CD8-positive, alpha-beta T cell (primary cell): ENCODE measurements at regions of chr1 and their contacts with region 1.

Region 1: DNA sequence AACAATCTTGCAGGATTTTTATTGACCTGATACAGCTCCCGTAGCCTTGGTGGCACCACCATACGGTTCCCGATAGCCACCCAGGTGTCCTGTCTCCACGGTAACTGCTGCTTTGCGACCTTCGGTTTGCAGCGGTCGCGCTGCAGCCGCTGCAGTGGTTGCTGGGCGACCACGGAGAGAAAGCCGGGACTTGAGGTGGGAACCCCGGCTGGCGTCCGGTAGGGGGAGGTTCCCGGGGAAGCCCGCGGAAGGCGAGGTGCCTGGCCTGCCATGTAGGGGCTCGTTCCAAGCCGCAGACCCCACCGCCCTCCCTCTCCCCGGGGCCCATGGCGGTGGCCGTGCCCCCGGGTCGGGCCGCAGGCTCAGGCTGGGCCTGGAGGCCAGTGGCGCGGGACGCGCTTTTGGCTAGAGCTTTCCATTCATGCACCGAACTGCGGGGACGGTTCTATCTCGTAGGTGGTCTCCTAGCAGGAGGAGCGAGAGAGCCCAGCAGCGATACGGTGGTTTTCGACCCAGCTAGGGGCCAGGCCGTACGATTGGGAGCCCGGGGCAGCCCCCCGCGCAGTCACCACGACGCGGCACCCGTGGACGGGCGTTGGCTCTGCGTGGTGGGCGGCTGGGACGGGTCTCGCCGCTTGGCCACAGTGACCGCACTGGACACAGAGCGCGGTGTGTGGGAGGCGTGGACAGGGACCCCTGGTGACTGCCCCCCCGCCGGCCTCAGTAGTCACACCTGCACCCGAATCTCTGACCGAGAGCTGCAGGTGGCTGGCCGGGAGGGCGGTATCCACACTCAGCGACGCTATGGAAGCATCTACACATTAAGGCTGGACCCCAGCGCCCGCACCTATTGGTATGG is at the start of gene KLHDC9:
- DNase-seq: peak; percentile 16 to 87 (median 68)
- ATAC-seq: peak; percentile 67
- H3K4me3 ChIP-seq: peak within 1 kb of the TSS; percentile 54 to 65
- H3K4me3 Mint-ChIP-seq: peak within 1 kb of the TSS; percentile 89
- H3K27ac ChIP-seq: peak within 1 kb of the TSS in 1 of 2 experiments; percentile 47
- H3K27ac Mint-ChIP-seq: peak within 1 kb of the TSS; percentile 92
- H3K4me1 ChIP-seq: peaks cover 14% of the 10 kb centered on the region
- H3K4me1 Mint-ChIP-seq: peaks cover 24% of the 10 kb centered on the region
- H3K27me3 ChIP-seq: no peaks in the 10 kb centered on the region
- H3K27me3 Mint-ChIP-seq: no peaks in the 10 kb centered on the region
- CTCF ChIP-seq: no peak
- total RNA-seq, gene KLHDC9: not detected

Region 2: GRCh38 chr1:160916666-160917065 is 181.8 kb before region 1 on chr1:
- CTCF ChIA-PET with region 1: no interaction called
- POLR2A ChIA-PET with region 1: no interaction called
- intact Hi-C with region 1: no loop called
- DNase-seq: no peak
- ATAC-seq: no peak
- H3K4me3 ChIP-seq: no peak overlapping the region
- H3K4me3 Mint-ChIP-seq: no peak overlapping the region
- H3K27ac ChIP-seq: no peak overlapping the region
- H3K27ac Mint-ChIP-seq: no peak overlapping the region
- H3K4me1 ChIP-seq: no peaks in the 10 kb centered on the region
- H3K4me1 Mint-ChIP-seq: no peaks in the 10 kb centered on the region
- H3K27me3 ChIP-seq: no peaks in the 10 kb centered on the region
- H3K27me3 Mint-ChIP-seq: peaks cover 8% of the 10 kb centered on the region
- CTCF ChIP-seq: no peak

Region 3: GRCh38 chr1:160987359-160988062 is 110.9 kb before region 1 on chr1:
- CTCF ChIA-PET with region 1: interaction called, 15 read pairs
- POLR2A ChIA-PET with region 1: no interaction called
- intact Hi-C with region 1: no loop called
- DNase-seq: no peak
- ATAC-seq: no peak
- H3K4me3 ChIP-seq: no peak overlapping the region
- H3K4me3 Mint-ChIP-seq: no peak overlapping the region
- H3K27ac ChIP-seq: no peak overlapping the region
- H3K27ac Mint-ChIP-seq: no peak overlapping the region
- H3K4me1 ChIP-seq: peaks cover 4% of the 10 kb centered on the region
- H3K4me1 Mint-ChIP-seq: peaks cover 10% of the 10 kb centered on the region
- H3K27me3 ChIP-seq: peaks cover 0 to 3% of the 10 kb centered on the region in 2 experiments
- H3K27me3 Mint-ChIP-seq: peaks cover 6% of the 10 kb centered on the region
- CTCF ChIP-seq: no peak

Region 4: GRCh38 chr1:161021165-161021960 is 77.1 kb before region 1 on chr1:
- CTCF ChIA-PET with region 1: interaction called, 16 read pairs
- POLR2A ChIA-PET with region 1: interaction called, 7 read pairs
- intact Hi-C with region 1: no loop called
- DNase-seq: peak; percentile 75 to 95 (median 89)
- ATAC-seq: peak; percentile 94
- H3K4me3 ChIP-seq: peak overlapping the region; percentile 51 to 89
- H3K4me3 Mint-ChIP-seq: peak overlapping the region; percentile 93
- H3K27ac ChIP-seq: peak overlapping the region; percentile 22 to 73
- H3K27ac Mint-ChIP-seq: peak overlapping the region; percentile 83
- H3K4me1 ChIP-seq: peaks cover 14% of the 10 kb centered on the region
- H3K4me1 Mint-ChIP-seq: peaks cover 37% of the 10 kb centered on the region
- H3K27me3 ChIP-seq: no peaks in the 10 kb centered on the region
- H3K27me3 Mint-ChIP-seq: no peaks in the 10 kb centered on the region
- CTCF ChIP-seq: no peak

Region 5: GRCh38 chr1:161054805-161055204 is 43.6 kb before region 1 on chr1:
- CTCF ChIA-PET with region 1: interaction called, 11 read pairs
- POLR2A ChIA-PET with region 1: interaction called, 3 read pairs
- intact Hi-C with region 1: loop called (anchors 5 kb)
- DNase-seq: no peak
- ATAC-seq: no peak
- H3K4me3 ChIP-seq: no peak overlapping the region
- H3K4me3 Mint-ChIP-seq: no peak overlapping the region
- H3K27ac ChIP-seq: no peak overlapping the region
- H3K27ac Mint-ChIP-seq: peak overlapping the region; percentile 22
- H3K4me1 ChIP-seq: peaks cover 13% of the 10 kb centered on the region
- H3K4me1 Mint-ChIP-seq: peaks cover 34% of the 10 kb centered on the region
- H3K27me3 ChIP-seq: no peaks in the 10 kb centered on the region
- H3K27me3 Mint-ChIP-seq: no peaks in the 10 kb centered on the region
- CTCF ChIP-seq: no peak

Region 6: GRCh38 chr1:161082991-161083742 is 15.3 kb before region 1 on chr1:
- CTCF ChIA-PET with region 1: interaction called, 18 read pairs
- POLR2A ChIA-PET with region 1: interaction called, 4 read pairs
- intact Hi-C with region 1: no loop called
- DNase-seq: peak in 1 of 9 experiments; percentile 41
- ATAC-seq: no peak
- H3K4me3 ChIP-seq: no peak overlapping the region
- H3K4me3 Mint-ChIP-seq: no peak overlapping the region
- H3K27ac ChIP-seq: no peak overlapping the region
- H3K27ac Mint-ChIP-seq: no peak overlapping the region
- H3K4me1 ChIP-seq: no peaks in the 10 kb centered on the region
- H3K4me1 Mint-ChIP-seq: no peaks in the 10 kb centered on the region
- H3K27me3 ChIP-seq: no peaks in the 10 kb centered on the region
- H3K27me3 Mint-ChIP-seq: no peaks in the 10 kb centered on the region
- CTCF ChIP-seq: no peak

Region 7: DNA sequence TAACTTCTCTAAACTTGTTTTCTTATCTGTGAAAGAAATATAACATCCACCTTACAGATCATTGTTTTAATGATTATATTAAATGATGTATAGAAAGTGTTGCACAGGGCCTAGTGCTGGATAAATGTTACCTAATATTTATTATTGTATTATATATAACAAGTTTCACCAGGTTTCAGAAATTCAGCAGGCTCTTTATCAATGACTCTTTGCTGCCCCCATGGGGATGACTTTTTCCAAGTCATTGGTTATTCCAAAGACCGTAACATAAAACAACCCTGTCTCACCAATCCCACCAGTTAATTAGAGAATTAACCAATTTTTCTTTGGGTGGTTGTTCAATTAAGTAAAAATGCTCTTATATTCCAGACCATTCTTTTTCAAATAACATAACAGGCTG is 41.3 kb after region 1 on chr1:
- CTCF ChIA-PET with region 1: interaction called, 47 read pairs
- POLR2A ChIA-PET with region 1: interaction called, 3 read pairs
- intact Hi-C with region 1: loop called (anchors 2 to 5 kb)
- DNase-seq: peak in 6 of 9 experiments; percentile 16 to 67 (median 46)
- ATAC-seq: no peak
- H3K4me3 ChIP-seq: no peak overlapping the region
- H3K4me3 Mint-ChIP-seq: no peak overlapping the region
- H3K27ac ChIP-seq: no peak overlapping the region
- H3K27ac Mint-ChIP-seq: no peak overlapping the region
- H3K4me1 ChIP-seq: no peaks in the 10 kb centered on the region
- H3K4me1 Mint-ChIP-seq: peaks cover 10% of the 10 kb centered on the region
- H3K27me3 ChIP-seq: no peaks in the 10 kb centered on the region
- H3K27me3 Mint-ChIP-seq: no peaks in the 10 kb centered on the region
- CTCF ChIP-seq: peak; percentile 53